ENCODE measurements at regions of chr2 and their contacts with region 1.

Region 1: GRCh38 chr2:108988796-108989713 is at the start of gene EDAR:
- DNase-seq: peak; percentile 49
- ATAC-seq: peak; percentile 95
- total RNA-seq, gene EDAR: not detected

Region 2: DNA sequence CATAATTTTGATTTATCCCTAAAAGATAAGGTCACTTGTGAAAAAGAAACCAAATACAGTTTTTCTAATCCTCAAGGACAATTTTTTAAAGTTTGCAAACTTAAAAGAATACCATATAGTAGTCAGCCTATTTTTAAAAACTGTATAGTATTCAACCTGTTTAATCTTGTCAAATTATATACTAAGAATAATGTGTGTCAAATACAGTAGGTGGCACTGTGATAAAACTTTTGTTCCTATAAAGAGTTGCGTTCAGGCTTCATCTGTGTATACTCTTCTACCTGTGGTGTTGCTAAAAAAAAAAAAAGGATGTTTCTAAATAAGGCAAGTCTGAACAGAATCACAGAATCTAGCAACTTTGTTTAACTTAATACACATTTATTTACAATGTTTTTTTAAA is 133.9 kb before region 1 on chr2:
- intact Hi-C with region 1: loop called (anchors 10 kb)
- DNase-seq: no peak
- ATAC-seq: peak; percentile 53

Region 3: GRCh38 chr2:109110170-109110569 is 121.1 kb after region 1 on chr2:
- intact Hi-C with region 1: no loop called
- DNase-seq: no peak
- ATAC-seq: no peak